A549 (cell line): ENCODE measurements at regions of chr9 and their contacts with region 1.

Region 1: GRCh38 chr9:107137495-107138202 is 145.4 kb upstream of the RAD23B start:
- DNase-seq: peak; percentile 32 to 48
- ATAC-seq: peak; percentile 44 to 83; a peak in 4 of 6 replicates
- H3K4me3 ChIP-seq: no peak overlapping the region
- H3K27ac ChIP-seq: no peak overlapping the region
- H3K4me1 ChIP-seq: no peaks in the 10 kb centered on the region
- CTCF ChIP-seq: peak; percentile 72
- EP300 ChIP-seq: no peak
- POLR2A ChIP-seq: no peak
- RAD21 ChIP-seq: peak; percentile 61 to 70

Region 2: DNA sequence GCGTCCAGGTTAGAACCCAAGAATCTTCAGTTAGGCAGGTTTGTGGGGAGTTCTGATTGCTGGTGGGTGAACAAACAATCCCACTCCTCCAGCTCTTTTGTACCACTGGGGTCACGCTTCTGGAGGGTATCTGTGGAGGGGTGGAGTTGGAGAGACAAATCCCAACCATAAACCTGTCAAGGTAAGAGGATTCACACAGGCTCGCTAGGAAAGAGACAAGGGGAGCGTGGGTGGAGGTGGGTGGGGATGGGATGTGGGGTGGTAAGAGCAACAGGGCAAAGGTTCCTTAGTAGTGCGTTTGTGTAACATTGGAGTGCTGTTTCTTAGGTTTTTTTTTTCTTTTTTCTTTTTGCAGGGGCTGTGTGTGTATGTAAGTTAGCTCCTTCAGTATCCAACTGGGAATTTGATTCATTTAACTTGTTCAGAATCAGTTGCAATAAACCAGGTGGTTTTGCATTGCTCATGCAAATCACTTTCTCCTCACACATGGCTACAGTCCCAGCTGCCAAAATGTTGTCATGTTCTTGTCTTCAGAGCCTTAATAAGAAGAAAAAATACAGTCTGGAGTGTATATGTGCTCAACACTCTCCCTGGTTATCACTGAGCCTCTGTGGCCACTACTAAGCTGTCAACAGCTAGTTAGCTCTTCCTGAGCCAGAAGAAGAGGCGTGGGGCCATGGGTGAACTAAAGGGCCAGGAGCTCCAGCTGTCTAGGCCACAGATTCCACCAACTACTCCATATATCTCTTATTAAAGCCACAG is 18.6 kb before region 1 on chr9:
- CTCF ChIA-PET with region 1: interaction called, 22 read pairs
- POLR2A ChIA-PET with region 1: no interaction called
- DNase-seq: no peak
- ATAC-seq: no peak
- H3K4me3 ChIP-seq: no peak overlapping the region
- H3K27ac ChIP-seq: no peak overlapping the region
- H3K4me1 ChIP-seq: no peaks in the 10 kb centered on the region
- CTCF ChIP-seq: no peak
- EP300 ChIP-seq: no peak
- POLR2A ChIP-seq: no peak
- RAD21 ChIP-seq: no peak

Region 3: GRCh38 chr9:107127602-107128001 is 10.0 kb before region 1 on chr9:
- CTCF ChIA-PET with region 1: interaction called, 31 read pairs
- POLR2A ChIA-PET with region 1: no interaction called
- DNase-seq: peak in 1 of 2 experiments; percentile 27
- ATAC-seq: peak; percentile 70 to 77; a peak in 4 of 6 replicates
- H3K4me3 ChIP-seq: no peak overlapping the region
- H3K27ac ChIP-seq: no peak overlapping the region
- H3K4me1 ChIP-seq: no peaks in the 10 kb centered on the region
- CTCF ChIP-seq: no peak
- EP300 ChIP-seq: no peak
- POLR2A ChIP-seq: no peak
- RAD21 ChIP-seq: peak in 1 of 2 experiments; percentile 26; a peak in 2 of 5 replicates

Region 4: GRCh38 chr9:107158321-107158720 is 20.7 kb after region 1 on chr9:
- CTCF ChIA-PET with region 1: interaction called, 13 read pairs
- POLR2A ChIA-PET with region 1: no interaction called
- DNase-seq: peak; percentile 31 to 40
- ATAC-seq: peak; percentile 92 to 97
- H3K4me3 ChIP-seq: no peak overlapping the region
- H3K27ac ChIP-seq: no peak overlapping the region
- H3K4me1 ChIP-seq: no peaks in the 10 kb centered on the region
- CTCF ChIP-seq: peak; percentile 32; the same call in 2 of the 3 replicates
- EP300 ChIP-seq: no peak
- POLR2A ChIP-seq: no peak
- RAD21 ChIP-seq: peak; percentile 42 to 58; a peak in 4 of 5 replicates

Region 5: GRCh38 chr9:107172160-107172978 is 34.7 kb after region 1 on chr9:
- CTCF ChIA-PET with region 1: interaction called, 13 read pairs
- POLR2A ChIA-PET with region 1: no interaction called
- DNase-seq: peak; percentile 35 to 75
- ATAC-seq: peak; percentile 89 to 96
- H3K4me3 ChIP-seq: no peak overlapping the region
- H3K27ac ChIP-seq: no peak overlapping the region
- H3K4me1 ChIP-seq: no peaks in the 10 kb centered on the region
- CTCF ChIP-seq: peak; percentile 88
- EP300 ChIP-seq: no peak
- POLR2A ChIP-seq: no peak
- RAD21 ChIP-seq: peak; percentile 89 to 92

Region 6: DNA sequence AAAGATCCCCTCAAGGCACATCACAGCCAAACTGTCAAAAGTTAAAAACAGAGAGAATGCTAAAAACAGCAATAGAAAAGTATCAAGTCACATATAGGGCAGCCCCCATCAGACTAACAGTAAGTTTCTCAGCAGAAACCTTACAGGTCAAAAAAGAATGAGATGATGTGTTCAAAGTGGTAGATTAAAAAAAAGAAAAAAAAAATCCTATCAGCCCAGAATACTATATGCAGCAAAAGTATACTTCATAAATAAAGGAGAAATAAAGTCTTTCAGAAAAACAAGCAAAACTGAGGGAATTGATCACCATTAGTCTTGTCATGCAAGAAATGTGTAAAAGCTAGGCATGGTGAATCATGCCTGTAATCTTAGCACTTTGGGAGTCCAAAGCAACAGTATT is 45.5 kb after region 1 on chr9:
- CTCF ChIA-PET with region 1: no interaction called
- POLR2A ChIA-PET with region 1: no interaction called
- DNase-seq: no peak
- ATAC-seq: no peak
- H3K4me3 ChIP-seq: no peak overlapping the region
- H3K27ac ChIP-seq: no peak overlapping the region
- H3K4me1 ChIP-seq: no peaks in the 10 kb centered on the region
- CTCF ChIP-seq: no peak
- EP300 ChIP-seq: no peak
- POLR2A ChIP-seq: no peak
- RAD21 ChIP-seq: no peak